Activated naive CD4-positive, alpha-beta T cell treated with anti-CD3 and anti-CD28 coated beads for 36 hours (primary cell): ENCODE measurements at regions of chr15 and their contacts with region 1.

Region 1: GRCh38 chr15:70559265-70560239 is 203.8 kb downstream of the UACA start:
- DNase-seq: peak; percentile 92
- H3K4me3 Mint-ChIP-seq: no peak overlapping the region
- H3K27ac Mint-ChIP-seq: no peak overlapping the region
- H3K4me1 Mint-ChIP-seq: peaks cover 12% of the 10 kb centered on the region
- H3K27me3 Mint-ChIP-seq: no peaks in the 10 kb centered on the region

Region 2: DNA sequence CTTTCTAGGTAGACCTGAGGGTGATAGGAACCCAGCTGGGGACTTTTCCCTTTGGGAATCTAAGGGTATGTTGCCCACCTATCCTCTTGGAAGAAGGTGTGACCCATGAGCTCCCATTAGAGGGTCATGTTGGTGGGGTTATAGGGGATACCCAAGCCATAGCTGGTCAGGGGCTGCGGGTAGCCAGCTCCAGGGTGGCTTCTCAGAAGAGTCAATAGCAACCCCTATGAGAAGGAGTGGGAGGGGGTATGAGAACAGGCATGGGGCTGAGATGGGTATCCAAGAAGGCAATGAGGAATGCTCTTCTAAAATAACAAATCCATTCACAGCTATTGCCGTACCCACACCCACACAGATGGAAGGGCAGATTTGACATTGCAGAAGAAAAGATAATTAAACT is 14.0 kb before region 1 on chr15:
- CTCF ChIA-PET with region 1: interaction called, 8 read pairs
- intact Hi-C with region 1: loop called (anchors 1 kb)
- DNase-seq: no peak
- H3K4me3 Mint-ChIP-seq: no peak overlapping the region
- H3K27ac Mint-ChIP-seq: peak overlapping the region; percentile 91
- H3K4me1 Mint-ChIP-seq: peaks cover 60% of the 10 kb centered on the region
- H3K27me3 Mint-ChIP-seq: no peaks in the 10 kb centered on the region

Region 3: DNA sequence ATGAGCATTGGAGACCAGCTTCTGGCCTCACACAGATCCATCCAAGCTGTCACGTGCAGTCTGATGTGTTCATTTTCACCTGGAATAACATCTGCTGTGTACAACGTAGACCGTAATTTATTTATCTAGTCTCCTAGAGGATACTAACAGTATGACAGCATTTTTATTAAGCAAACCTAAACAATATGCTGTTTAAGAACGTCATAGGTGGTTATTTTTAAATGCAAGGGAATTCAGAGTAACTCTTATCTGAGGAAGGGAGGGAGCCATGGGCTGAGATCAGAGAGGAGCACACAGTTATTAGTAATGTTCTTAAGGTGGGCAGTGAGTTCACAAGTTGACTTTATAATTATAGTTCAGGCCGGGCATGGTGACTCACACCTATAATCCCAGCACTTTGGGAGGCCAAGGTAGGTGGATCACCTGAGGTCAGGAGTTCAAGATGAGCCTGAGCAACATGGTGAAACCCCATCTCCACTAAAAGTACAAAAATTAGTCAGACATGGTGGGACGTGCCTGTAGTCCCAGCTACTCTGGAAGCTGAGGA is 10.2 kb after region 1 on chr15:
- CTCF ChIA-PET with region 1: interaction called, 5 read pairs
- intact Hi-C with region 1: loop called (anchors 1 kb)
- DNase-seq: peak; percentile 64
- H3K4me3 Mint-ChIP-seq: no peak overlapping the region
- H3K27ac Mint-ChIP-seq: no peak overlapping the region
- H3K4me1 Mint-ChIP-seq: peaks cover 12% of the 10 kb centered on the region
- H3K27me3 Mint-ChIP-seq: no peaks in the 10 kb centered on the region